Sciatic nerve (tissue), 2 donors: ENCODE measurements at regions of chr5 and their contacts with region 1.

Region 1: DNA sequence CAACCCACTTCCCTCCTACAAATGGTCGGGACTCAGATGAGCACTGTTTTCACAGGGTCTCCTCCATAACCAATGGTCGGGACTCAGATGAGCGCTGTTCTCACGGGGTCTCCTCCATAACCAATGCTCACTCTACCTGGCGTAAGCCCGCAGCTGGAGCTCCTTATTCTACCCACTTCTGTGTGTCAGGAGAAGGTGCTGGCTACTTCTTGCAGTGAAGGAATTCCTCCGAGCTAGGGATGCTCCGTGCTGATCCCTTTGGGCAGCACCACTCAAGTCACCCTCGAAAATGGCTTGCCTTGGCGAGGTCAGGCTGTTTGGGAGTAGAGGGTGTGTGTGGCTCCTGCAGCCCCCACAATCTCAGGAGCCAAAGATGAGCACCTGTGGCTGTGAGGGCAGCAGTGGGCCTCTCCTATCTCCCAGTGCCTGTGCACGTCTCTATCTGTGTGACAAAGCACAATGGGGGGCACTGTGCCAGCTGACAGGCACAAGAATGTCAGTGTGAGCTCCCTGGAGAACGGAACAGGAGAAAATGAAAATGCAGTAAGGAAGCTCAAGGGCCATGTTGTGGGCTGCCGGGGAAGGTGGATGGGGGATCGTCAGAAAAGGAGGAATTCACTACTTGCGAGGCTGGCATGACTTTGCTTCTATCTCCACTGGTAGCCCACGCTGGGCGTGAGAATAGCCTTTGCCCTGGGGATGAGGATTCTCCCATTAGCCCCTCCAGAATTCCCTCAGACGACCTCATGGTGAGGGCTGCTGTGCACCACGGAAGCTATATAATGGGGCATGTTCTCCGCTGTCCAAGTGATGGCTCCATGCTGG is 3.9 kb upstream of the BTNL9 start:
- DNase-seq: no peak
- ATAC-seq: no peak

Region 2: DNA sequence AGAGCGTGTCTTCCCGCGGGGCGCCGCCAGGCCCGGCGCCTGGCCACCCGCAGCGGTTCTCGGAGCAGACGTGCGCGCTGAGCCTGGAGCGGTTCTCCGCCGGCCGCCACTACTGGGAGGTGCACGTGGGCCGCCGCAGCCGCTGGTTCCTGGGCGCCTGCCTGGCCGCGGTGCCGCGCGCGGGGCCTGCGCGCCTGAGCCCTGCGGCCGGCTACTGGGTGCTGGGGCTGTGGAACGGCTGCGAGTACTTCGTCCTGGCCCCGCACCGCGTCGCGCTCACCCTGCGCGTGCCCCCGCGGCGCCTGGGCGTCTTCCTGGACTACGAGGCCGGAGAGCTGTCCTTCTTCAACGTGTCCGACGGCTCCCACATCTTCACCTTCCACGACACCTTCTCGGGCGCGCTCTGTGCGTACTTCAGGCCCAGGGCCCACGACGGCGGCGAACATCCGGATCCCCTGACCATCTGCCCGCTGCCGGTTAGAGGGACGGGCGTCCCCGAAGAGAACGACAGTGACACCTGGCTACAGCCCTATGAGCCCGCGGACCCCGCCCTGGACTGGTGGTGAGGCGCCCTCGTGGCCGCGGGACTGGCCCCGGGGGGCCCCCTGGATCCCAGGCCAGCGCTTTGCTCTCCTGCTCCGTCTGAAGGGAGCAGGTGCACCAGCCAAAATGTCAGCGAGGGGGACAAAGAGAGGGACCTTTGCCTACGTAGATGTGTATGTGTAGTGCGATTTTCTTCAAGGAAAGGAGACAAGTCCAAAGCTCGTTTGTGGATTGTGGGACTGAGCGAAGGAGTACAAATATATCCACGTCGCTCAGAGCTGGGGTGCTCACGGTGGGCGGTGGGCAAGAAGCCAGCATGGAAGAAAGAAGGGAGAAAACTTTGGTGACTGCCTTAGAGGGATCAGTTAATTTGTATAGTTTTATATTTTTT is 23.4 kb after region 1 on chr5:
- intact Hi-C with region 1: loop called (anchors 1 kb)
- DNase-seq: no peak
- ATAC-seq: no peak